ENCODE measurements at regions of chr7 and their contacts with region 1.

Region 1: GRCh38 chr7:30938435-30939316 is 25.1 kb upstream of the GHRHR start:
- DNase-seq: peak; percentile 55
- H3K4me3 Mint-ChIP-seq: no peak overlapping the region
- H3K27ac Mint-ChIP-seq: no peak overlapping the region
- H3K4me1 Mint-ChIP-seq: no peaks in the 10 kb centered on the region
- H3K27me3 Mint-ChIP-seq: peaks cover 37% of the 10 kb centered on the region

Region 2: GRCh38 chr7:30478349-30479201 is 460.1 kb before region 1 on chr7 and contains the start of gene NOD1:
- intact Hi-C with region 1: no loop called
- DNase-seq: peak; percentile 71
- H3K4me3 Mint-ChIP-seq: peak within 1 kb of the TSS; percentile 90
- H3K27ac Mint-ChIP-seq: peak within 1 kb of the TSS; percentile 91
- H3K4me1 Mint-ChIP-seq: peaks cover 61% of the 10 kb centered on the region
- H3K27me3 Mint-ChIP-seq: no peaks in the 10 kb centered on the region
- total RNA-seq, gene NOD1: 9.1 and 13.1 TPM in 2 replicates

Region 3: GRCh38 chr7:30974605-30975255 is 36.1 kb after region 1 on chr7:
- intact Hi-C with region 1: loop called (anchors 1 kb)
- DNase-seq: peak; percentile 67
- H3K4me3 Mint-ChIP-seq: no peak overlapping the region
- H3K27ac Mint-ChIP-seq: peak overlapping the region; percentile 79
- H3K4me1 Mint-ChIP-seq: peaks cover 16% of the 10 kb centered on the region
- H3K27me3 Mint-ChIP-seq: peaks cover 14% of the 10 kb centered on the region